B cell (primary cell): ENCODE measurements at regions of chr20 and their contacts with region 1.

Region 1: DNA sequence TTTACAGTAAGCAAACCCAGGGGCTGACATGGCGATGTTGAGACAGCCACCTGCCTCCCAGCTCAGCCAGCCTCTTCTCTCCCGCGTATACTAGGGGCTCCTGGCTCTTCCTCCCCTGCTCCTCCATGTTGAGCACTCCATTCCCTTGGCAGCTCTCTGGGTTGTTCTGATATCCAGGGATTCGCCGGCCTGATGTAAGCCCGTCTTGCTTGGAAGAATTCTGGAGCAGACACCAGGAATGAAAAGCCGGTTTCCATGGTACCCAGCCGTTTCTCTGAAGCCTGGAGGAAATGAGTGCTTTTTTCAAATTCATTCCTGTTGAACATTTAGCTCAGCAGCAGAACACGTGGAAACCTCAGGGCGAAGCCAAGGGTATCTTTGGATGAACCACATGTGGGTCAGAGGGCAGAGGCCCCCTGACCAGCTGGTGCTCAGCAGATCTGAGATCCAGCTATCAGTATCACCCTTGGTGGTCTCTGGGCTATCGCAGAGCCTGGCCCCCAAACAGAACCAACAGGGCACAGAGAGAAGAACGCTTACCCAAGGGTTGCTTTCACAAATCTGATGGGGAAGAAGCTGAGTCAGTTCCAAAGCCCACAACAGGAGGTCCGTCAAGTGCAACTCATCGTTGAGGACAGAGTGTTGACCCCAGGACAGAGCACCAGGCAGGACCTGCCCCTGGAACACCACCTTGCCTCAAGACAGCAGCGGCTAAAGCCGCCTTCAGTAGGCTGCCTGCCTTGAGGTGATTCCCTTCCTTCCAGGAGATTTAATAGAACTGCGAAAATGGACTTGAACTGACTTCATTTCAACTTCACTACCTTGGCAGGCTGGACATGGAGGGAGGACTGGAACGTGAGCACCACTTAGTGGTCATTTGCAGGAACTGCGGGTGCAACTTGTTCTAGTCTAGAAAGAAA is 96.1 kb upstream of the RIN2 start:
- DNase-seq: peak; percentile 77
- ATAC-seq: peak; percentile 56
- H3K4me3 ChIP-seq: no peak overlapping the region
- H3K4me3 Mint-ChIP-seq: no peak overlapping the region
- H3K27ac ChIP-seq: no peak overlapping the region
- H3K27ac Mint-ChIP-seq: no peak overlapping the region
- H3K4me1 ChIP-seq: peaks cover 19 to 24% of the 10 kb centered on the region in 2 donors
- H3K4me1 Mint-ChIP-seq: peaks cover 29% of the 10 kb centered on the region
- H3K27me3 ChIP-seq: peaks cover 0 to 16% (median 6%) of the 10 kb centered on the region in 4 experiments
- H3K27me3 Mint-ChIP-seq: peaks cover 32% of the 10 kb centered on the region
- CTCF ChIP-seq: peak; percentile 99

Region 2: GRCh38 chr20:18632196-18633009 is 1029.6 kb before region 1 on chr20:
- CTCF ChIA-PET with region 1: interaction called, 24 read pairs
- POLR2A ChIA-PET with region 1: no interaction called
- intact Hi-C with region 1: no loop called
- DNase-seq: peak; percentile 67
- ATAC-seq: peak; percentile 93
- H3K4me3 ChIP-seq: no peak overlapping the region
- H3K4me3 Mint-ChIP-seq: no peak overlapping the region
- H3K27ac ChIP-seq: no peak overlapping the region
- H3K27ac Mint-ChIP-seq: no peak overlapping the region
- H3K4me1 ChIP-seq: no peaks in the 10 kb centered on the region
- H3K4me1 Mint-ChIP-seq: no peaks in the 10 kb centered on the region
- H3K27me3 ChIP-seq: no peaks in the 10 kb centered on the region
- H3K27me3 Mint-ChIP-seq: no peaks in the 10 kb centered on the region
- CTCF ChIP-seq: peak; percentile 95

Region 3: GRCh38 chr20:19621072-19621471 is 40.9 kb before region 1 on chr20:
- CTCF ChIA-PET with region 1: interaction called, 295 read pairs
- POLR2A ChIA-PET with region 1: no interaction called
- intact Hi-C with region 1: no loop called
- DNase-seq: no peak
- ATAC-seq: no peak
- H3K4me3 ChIP-seq: no peak overlapping the region
- H3K4me3 Mint-ChIP-seq: no peak overlapping the region
- H3K27ac ChIP-seq: no peak overlapping the region
- H3K27ac Mint-ChIP-seq: no peak overlapping the region
- H3K4me1 ChIP-seq: no peaks in the 10 kb centered on the region
- H3K4me1 Mint-ChIP-seq: no peaks in the 10 kb centered on the region
- H3K27me3 ChIP-seq: peaks cover 0 to 7% (median 3%) of the 10 kb centered on the region in 4 experiments
- H3K27me3 Mint-ChIP-seq: peaks cover 36% of the 10 kb centered on the region
- CTCF ChIP-seq: no peak

Region 4: GRCh38 chr20:19644085-19644484 is 17.9 kb before region 1 on chr20:
- CTCF ChIA-PET with region 1: interaction called, 11 read pairs
- POLR2A ChIA-PET with region 1: no interaction called
- intact Hi-C with region 1: no loop called
- DNase-seq: no peak
- ATAC-seq: no peak
- H3K4me3 ChIP-seq: no peak overlapping the region
- H3K4me3 Mint-ChIP-seq: no peak overlapping the region
- H3K27ac ChIP-seq: no peak overlapping the region
- H3K27ac Mint-ChIP-seq: no peak overlapping the region
- H3K4me1 ChIP-seq: no peaks in the 10 kb centered on the region
- H3K4me1 Mint-ChIP-seq: peaks cover 2% of the 10 kb centered on the region
- H3K27me3 ChIP-seq: peaks cover 0 to 3% (median 0%) of the 10 kb centered on the region in 4 experiments
- H3K27me3 Mint-ChIP-seq: peaks cover 15% of the 10 kb centered on the region
- CTCF ChIP-seq: no peak

Region 5: DNA sequence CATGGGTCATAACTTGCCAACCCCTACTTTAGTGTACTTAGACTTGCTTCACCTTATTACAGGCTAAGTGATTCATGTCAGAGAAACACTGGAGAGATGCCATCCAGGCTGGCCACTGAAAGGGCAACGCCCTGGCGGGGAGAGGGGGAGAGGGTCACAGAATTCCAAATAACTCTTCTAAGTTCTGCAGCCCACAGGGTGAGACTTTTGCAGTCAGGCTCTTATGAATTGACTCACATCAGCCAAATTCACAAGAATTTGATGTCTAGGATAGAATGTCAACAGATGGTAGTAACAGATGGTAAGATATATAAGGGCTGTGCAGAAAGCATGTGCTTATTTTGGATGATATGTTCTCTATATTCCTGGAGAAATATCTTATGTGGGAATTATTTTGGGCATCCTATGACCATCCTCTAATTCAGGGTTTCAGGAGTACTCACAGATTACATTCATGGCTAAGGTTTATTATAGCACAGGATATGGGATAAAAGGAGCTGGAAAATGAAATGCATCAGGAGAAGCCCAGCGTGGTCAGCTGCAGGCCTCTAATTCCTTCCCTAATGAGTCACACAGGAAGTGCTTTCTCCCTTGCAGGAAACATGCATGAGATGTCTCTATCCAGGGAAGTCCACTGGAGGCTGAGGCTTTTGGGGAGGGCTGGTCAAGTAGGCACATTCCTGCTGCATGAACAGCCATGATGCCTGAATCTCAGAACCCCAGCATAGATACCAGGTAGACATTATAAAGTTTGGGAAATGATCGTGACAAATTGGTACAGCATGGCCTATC is 37.4 kb after region 1 on chr20:
- CTCF ChIA-PET with region 1: no interaction called
- POLR2A ChIA-PET with region 1: no interaction called
- intact Hi-C with region 1: no loop called
- DNase-seq: no peak
- ATAC-seq: no peak
- H3K4me3 ChIP-seq: no peak overlapping the region
- H3K4me3 Mint-ChIP-seq: no peak overlapping the region
- H3K27ac ChIP-seq: no peak overlapping the region
- H3K27ac Mint-ChIP-seq: no peak overlapping the region
- H3K4me1 ChIP-seq: peaks cover 31 to 35% of the 10 kb centered on the region in 2 donors
- H3K4me1 Mint-ChIP-seq: peaks cover 40% of the 10 kb centered on the region
- H3K27me3 ChIP-seq: no peaks in the 10 kb centered on the region
- H3K27me3 Mint-ChIP-seq: peaks cover 3% of the 10 kb centered on the region
- CTCF ChIP-seq: no peak

Region 6: GRCh38 chr20:20369250-20370093 is 707.5 kb after region 1 on chr20:
- CTCF ChIA-PET with region 1: no interaction called
- POLR2A ChIA-PET with region 1: no interaction called
- intact Hi-C with region 1: no loop called
- DNase-seq: peak; percentile 46
- ATAC-seq: no peak
- H3K4me3 ChIP-seq: peak overlapping the region in 1 of 5 experiments; percentile 39
- H3K4me3 Mint-ChIP-seq: peak overlapping the region; percentile 78
- H3K27ac ChIP-seq: no peak overlapping the region
- H3K27ac Mint-ChIP-seq: peak overlapping the region; percentile 71
- H3K4me1 ChIP-seq: peaks cover 19 to 23% of the 10 kb centered on the region in 2 donors
- H3K4me1 Mint-ChIP-seq: peaks cover 21% of the 10 kb centered on the region
- H3K27me3 ChIP-seq: peaks cover 0 to 55% (median 38%) of the 10 kb centered on the region in 4 experiments
- H3K27me3 Mint-ChIP-seq: peaks cover 56% of the 10 kb centered on the region
- CTCF ChIP-seq: no peak